H1 (cell line): ENCODE measurements at regions of chr6 and their contacts with region 1.

Region 1: DNA sequence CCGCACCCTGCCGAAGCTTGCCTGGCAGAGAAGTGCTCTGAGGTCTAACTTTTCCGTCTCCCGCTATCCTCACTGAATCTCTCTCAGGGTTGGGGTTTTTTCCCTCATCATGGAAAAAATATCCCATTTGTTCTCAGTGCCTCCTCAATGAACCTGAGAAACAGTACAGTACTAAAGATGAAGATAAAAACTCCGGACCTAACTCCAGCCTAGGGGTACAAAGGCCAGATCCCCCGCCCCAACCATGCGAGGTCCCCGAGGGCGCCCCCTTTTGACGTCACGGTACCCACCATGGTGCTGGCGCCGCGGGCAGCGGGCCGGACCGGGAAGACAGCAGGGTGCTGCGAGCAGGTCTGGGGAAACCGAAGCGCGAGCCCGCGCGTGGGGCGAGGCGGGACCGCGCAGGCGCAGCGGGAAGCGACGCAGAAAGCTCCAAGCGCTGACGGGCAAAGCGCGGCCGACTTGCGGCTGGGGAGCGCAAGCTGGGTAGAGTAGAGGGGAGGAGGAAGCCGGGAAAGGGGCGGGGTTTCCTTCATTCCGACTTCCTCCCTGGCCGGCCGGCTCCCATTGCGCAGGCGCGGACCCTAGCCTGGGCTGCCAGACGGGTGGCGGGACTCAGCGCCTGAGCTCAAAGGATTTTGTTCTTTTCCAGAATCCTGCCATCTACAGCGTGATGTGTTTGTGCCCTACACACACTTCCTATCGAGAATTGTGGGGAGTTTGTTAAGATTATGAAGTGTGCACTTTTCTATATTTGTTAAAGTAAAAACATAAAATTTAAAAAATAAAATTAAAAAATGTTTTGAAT is at the start of gene LSM2:
- DNase-seq: peak in 1 of 2 experiments; percentile 99
- H3K4me3 ChIP-seq: peak within 1 kb of the TSS; percentile 76 to 96 (median 86)
- H3K27ac ChIP-seq: peak within 1 kb of the TSS; percentile 91
- H3K4me1 ChIP-seq: peaks cover 0 to 2% (median 0%) of the 10 kb centered on the region in 4 experiments; a peak in 1 of 7 replicates
- H3K27me3 ChIP-seq: no peaks in the 10 kb centered on the region
- CTCF ChIP-seq: no peak
- EP300 ChIP-seq: no peak
- POLR2A ChIP-seq: peak; percentile 58 to 69
- RAD21 ChIP-seq: 0 out of 4 replicates have a peak, but pooled peaks have one; percentile 1 to 8
- total RNA-seq, gene LSM2: 127 and 132 TPM in 2 replicates

Region 2: DNA sequence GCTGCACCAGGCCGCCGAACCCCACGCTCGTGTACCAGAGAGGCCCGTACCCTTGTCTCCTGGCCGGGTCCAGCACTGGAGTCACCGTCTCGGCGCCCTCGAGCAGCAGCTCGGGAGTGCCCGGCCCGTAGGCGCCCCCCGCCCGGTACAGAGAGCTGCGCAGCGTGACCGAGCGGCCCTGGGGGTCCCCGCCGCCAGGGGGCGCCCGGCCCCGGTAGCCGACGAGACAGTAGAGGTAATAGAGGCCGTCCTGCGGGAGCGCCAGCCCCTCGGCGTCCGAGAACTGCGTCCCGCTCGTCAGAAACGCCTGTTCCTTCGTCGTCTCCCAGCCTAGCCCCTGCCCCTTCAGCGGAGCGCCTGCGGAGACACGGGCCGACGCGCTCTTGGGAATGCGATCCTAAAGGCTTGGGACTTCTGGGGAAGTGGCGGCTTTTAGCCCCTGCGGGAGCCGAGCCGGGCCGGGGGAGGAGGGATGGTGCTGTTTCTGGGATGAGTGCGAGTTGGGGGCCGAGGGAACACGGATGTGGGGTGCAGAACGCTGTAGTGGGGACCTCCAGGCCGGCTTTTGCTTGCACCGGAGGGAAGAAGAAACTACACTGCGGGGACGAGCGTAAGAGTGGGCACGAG is 225.7 kb before region 1 on chr6:
- CTCF ChIA-PET with region 1: no interaction called
- POLR2A ChIA-PET with region 1: no interaction called
- DNase-seq: peak; percentile 38 to 96
- H3K4me3 ChIP-seq: peak overlapping the region; percentile 54 to 89 (median 80)
- H3K27ac ChIP-seq: no peak overlapping the region
- H3K4me1 ChIP-seq: peaks cover 0 to 6% (median 6%) of the 10 kb centered on the region in 4 experiments; a peak in 6 of 7 replicates
- H3K27me3 ChIP-seq: peaks cover 0 to 8% (median 7%) of the 10 kb centered on the region in 4 experiments; a peak in 5 of 7 replicates
- CTCF ChIP-seq: peak in 2 of 3 experiments; percentile 89 to 93; a peak in 3 of 4 replicates
- EP300 ChIP-seq: no peak
- POLR2A ChIP-seq: 0 out of 3 replicates have a peak, but pooled peaks of 1 of the 2 experiments have one; percentile 18
- RAD21 ChIP-seq: peak; percentile 39 to 66

Region 3: GRCh38 chr6:31822036-31822821 is 15.6 kb after region 1 on chr6:
- CTCF ChIA-PET with region 1: interaction called, 13 read pairs
- POLR2A ChIA-PET with region 1: interaction called, 119 read pairs
- DNase-seq: peak in 1 of 2 experiments; percentile 74
- H3K4me3 ChIP-seq: peak overlapping the region; percentile 66 to 87 (median 78)
- H3K27ac ChIP-seq: peak overlapping the region; percentile 52; the same call in 1 of the 2 replicates
- H3K4me1 ChIP-seq: peaks cover 5 to 16% (median 9%) of the 10 kb centered on the region in 4 experiments; a peak in 6 of 7 replicates
- H3K27me3 ChIP-seq: no peaks in the 10 kb centered on the region; a peak in 1 of 7 replicates
- CTCF ChIP-seq: no peak
- EP300 ChIP-seq: no peak
- POLR2A ChIP-seq: no peak
- RAD21 ChIP-seq: no peak